PC-9 (cell line): ENCODE measurements at regions of chr19 and their contacts with region 1.

Region 1: GRCh38 chr19:34260771-34261173 is 6.4 kb downstream of the GARRE1 start:
- DNase-seq: no peak
- H3K4me3 ChIP-seq: no peak overlapping the region
- H3K27ac ChIP-seq: no peak overlapping the region
- H3K4me1 ChIP-seq: peaks cover 24% of the 10 kb centered on the region
- H3K27me3 ChIP-seq: no peaks in the 10 kb centered on the region
- CTCF ChIP-seq: no peak

Region 2: GRCh38 chr19:34201133-34201532 is 59.6 kb before region 1 on chr19:
- CTCF ChIA-PET with region 1: no interaction called
- POLR2A ChIA-PET with region 1: interaction called, 15 read pairs
- intact Hi-C with region 1: no loop called
- DNase-seq: no peak
- H3K4me3 ChIP-seq: no peak overlapping the region
- H3K27ac ChIP-seq: no peak overlapping the region
- H3K4me1 ChIP-seq: no peaks in the 10 kb centered on the region
- H3K27me3 ChIP-seq: no peaks in the 10 kb centered on the region
- CTCF ChIP-seq: no peak

Region 3: GRCh38 chr19:34328982-34329381 is 68.2 kb after region 1 on chr19:
- CTCF ChIA-PET with region 1: interaction called, 11 read pairs
- POLR2A ChIA-PET with region 1: no interaction called
- intact Hi-C with region 1: no loop called
- DNase-seq: peak in 1 of 2 experiments; percentile 58
- H3K4me3 ChIP-seq: no peak overlapping the region
- H3K27ac ChIP-seq: no peak overlapping the region; the same call in 1 of the 2 replicates
- H3K4me1 ChIP-seq: peaks cover 12% of the 10 kb centered on the region; the same call in 1 of the 2 replicates
- H3K27me3 ChIP-seq: no peaks in the 10 kb centered on the region
- CTCF ChIP-seq: no peak